Activated CD4-positive, alpha-beta memory T cell treated with anti-CD3 and anti-CD28 coated beads for 36 hours (primary cell): ENCODE measurements at regions of chr1 and their contacts with region 1.

Region 1: DNA sequence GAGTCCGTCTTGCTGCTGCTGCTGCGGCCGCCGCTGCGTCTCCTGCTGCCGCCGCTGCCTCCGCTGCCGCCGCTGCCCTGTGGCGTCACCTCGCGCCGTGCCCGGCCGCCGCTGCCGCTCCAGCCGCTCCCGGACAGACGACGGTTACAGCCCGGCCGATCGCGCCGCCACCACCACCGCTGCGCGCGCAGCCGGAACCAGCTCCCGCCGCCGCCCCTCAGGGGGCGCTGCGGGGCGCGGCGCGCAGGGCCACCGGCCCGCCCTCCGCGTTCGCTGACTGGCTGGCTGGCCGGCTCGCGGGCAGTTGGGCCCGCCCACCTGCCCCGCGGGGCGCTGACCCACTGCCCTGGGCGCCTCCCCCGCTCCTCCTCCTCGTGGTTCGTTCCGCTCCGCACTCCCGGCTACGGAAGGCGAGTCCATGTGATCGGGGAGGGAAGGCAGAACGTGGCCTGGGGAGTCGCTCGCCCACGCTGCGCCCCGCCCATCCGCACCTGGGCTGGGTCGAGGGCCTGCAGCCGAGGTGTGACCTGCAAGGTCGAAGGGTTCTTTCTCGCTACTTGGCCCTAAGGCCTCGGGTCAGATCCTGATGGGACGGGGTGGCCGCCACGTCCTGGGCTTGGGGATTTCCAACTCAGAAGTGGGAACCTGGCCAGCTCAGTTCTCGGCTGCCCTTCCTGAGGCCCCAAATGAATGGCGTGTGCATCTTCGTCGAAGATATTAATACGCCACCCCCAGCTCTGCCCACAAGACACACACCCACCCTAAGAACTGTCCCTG is at the start of gene PTP4A2:
- DNase-seq: peak; percentile 94
- H3K4me3 Mint-ChIP-seq: peak within 1 kb of the TSS; percentile 98
- H3K27ac Mint-ChIP-seq: peak within 1 kb of the TSS; percentile 96
- H3K4me1 Mint-ChIP-seq: peaks cover 66% of the 10 kb centered on the region
- H3K27me3 Mint-ChIP-seq: no peaks in the 10 kb centered on the region
- total RNA-seq, gene PTP4A2: 275 to 285 TPM

Region 2: GRCh38 chr1:30756545-30757195 is 1181.7 kb before region 1 on chr1:
- CTCF ChIA-PET with region 1: no interaction called
- POLR2A ChIA-PET with region 1: no interaction called
- intact Hi-C with region 1: loop called (anchors 10 kb)
- DNase-seq: peak; percentile 88
- H3K4me3 Mint-ChIP-seq: peak overlapping the region; percentile 98
- H3K27ac Mint-ChIP-seq: peak overlapping the region; percentile 99
- H3K4me1 Mint-ChIP-seq: peaks cover 86% of the 10 kb centered on the region
- H3K27me3 Mint-ChIP-seq: no peaks in the 10 kb centered on the region

Region 3: GRCh38 chr1:31705080-31705866 is 233.1 kb before region 1 on chr1:
- CTCF ChIA-PET with region 1: no interaction called
- POLR2A ChIA-PET with region 1: no interaction called
- intact Hi-C with region 1: no loop called
- DNase-seq: peak; percentile 88
- H3K4me3 Mint-ChIP-seq: peak overlapping the region; percentile 17
- H3K27ac Mint-ChIP-seq: no peak overlapping the region
- H3K4me1 Mint-ChIP-seq: peaks cover 37% of the 10 kb centered on the region
- H3K27me3 Mint-ChIP-seq: peaks cover 30% of the 10 kb centered on the region

Region 4: GRCh38 chr1:31910933-31911332 is 27.4 kb before region 1 on chr1:
- CTCF ChIA-PET with region 1: interaction called, 37 read pairs
- POLR2A ChIA-PET with region 1: interaction called, 5 read pairs
- intact Hi-C with region 1: loop called (anchors 1 kb)
- DNase-seq: peak; percentile 49
- H3K4me3 Mint-ChIP-seq: no peak overlapping the region
- H3K27ac Mint-ChIP-seq: peak overlapping the region; percentile 69
- H3K4me1 Mint-ChIP-seq: peaks cover 51% of the 10 kb centered on the region
- H3K27me3 Mint-ChIP-seq: no peaks in the 10 kb centered on the region

Region 5: DNA sequence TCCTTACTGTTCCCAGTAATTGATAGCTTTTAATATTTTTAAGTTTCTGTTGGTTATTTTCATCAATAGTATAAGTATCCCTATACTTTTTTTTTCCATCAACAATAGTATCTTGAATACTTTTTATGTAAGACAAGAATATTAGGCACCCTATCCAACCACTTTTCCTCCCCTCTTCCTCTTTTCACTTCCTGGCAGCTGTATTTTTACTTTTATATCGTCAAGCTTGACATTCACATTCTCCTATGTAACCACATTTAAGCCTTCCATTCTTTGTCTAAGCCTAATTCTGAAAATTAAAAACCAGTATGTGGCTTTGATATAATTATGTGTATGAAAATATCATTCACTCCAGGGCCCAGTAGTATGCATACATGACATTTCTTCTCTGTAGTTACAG is 143.7 kb after region 1 on chr1:
- CTCF ChIA-PET with region 1: no interaction called
- POLR2A ChIA-PET with region 1: no interaction called
- intact Hi-C with region 1: no loop called
- DNase-seq: no peak
- H3K4me3 Mint-ChIP-seq: no peak overlapping the region
- H3K27ac Mint-ChIP-seq: no peak overlapping the region
- H3K4me1 Mint-ChIP-seq: peaks cover 6% of the 10 kb centered on the region
- H3K27me3 Mint-ChIP-seq: no peaks in the 10 kb centered on the region

Region 6: GRCh38 chr1:32266921-32267591 is 328.7 kb after region 1 on chr1:
- CTCF ChIA-PET with region 1: no interaction called
- POLR2A ChIA-PET with region 1: no interaction called
- intact Hi-C with region 1: no loop called
- DNase-seq: peak; percentile 50
- H3K4me3 Mint-ChIP-seq: peak overlapping the region; percentile 67
- H3K27ac Mint-ChIP-seq: peak overlapping the region; percentile 98
- H3K4me1 Mint-ChIP-seq: peaks cover 60% of the 10 kb centered on the region
- H3K27me3 Mint-ChIP-seq: no peaks in the 10 kb centered on the region